Colonic mucosa (tissue), 4 donors: ENCODE measurements at regions of chr11 and their contacts with region 1.

Region 1: GRCh38 chr11:45655347-45655756 is 10.1 kb downstream of the CHST1 start:
- DNase-seq: peak; percentile 65
- H3K4me3 ChIP-seq: no peak overlapping the region
- H3K27ac ChIP-seq: no peak overlapping the region
- H3K4me1 ChIP-seq: no peaks in the 10 kb centered on the region
- H3K27me3 ChIP-seq: no peaks in the 10 kb centered on the region
- CTCF ChIP-seq: peak; percentile 88

Region 2: GRCh38 chr11:45371251-45372115 is 283.9 kb before region 1 on chr11:
- intact Hi-C with region 1: loop called (anchors 2 kb)
- DNase-seq: peak; percentile 62
- H3K4me3 ChIP-seq: no peak overlapping the region
- H3K27ac ChIP-seq: no peak overlapping the region
- H3K4me1 ChIP-seq: no peaks in the 10 kb centered on the region
- H3K27me3 ChIP-seq: no peaks in the 10 kb centered on the region
- CTCF ChIP-seq: peak; percentile 80

Region 3: GRCh38 chr11:45777127-45777969 is 122.0 kb after region 1 on chr11:
- intact Hi-C with region 1: no loop called
- DNase-seq: no peak
- H3K4me3 ChIP-seq: no peak overlapping the region
- H3K27ac ChIP-seq: no peak overlapping the region
- H3K4me1 ChIP-seq: no peaks in the 10 kb centered on the region
- H3K27me3 ChIP-seq: no peaks in the 10 kb centered on the region
- CTCF ChIP-seq: no peak